ENCODE measurements at regions of chr5 and their contacts with region 1.

Region 1: GRCh38 chr5:139560752-139561654 is at the start of gene UBE2D2:
- DNase-seq: peak; percentile 97
- H3K4me3 Mint-ChIP-seq: peak within 1 kb of the TSS; percentile 98
- H3K27ac Mint-ChIP-seq: peak within 1 kb of the TSS; percentile 95
- H3K4me1 Mint-ChIP-seq: peaks cover 27% of the 10 kb centered on the region
- H3K27me3 Mint-ChIP-seq: no peaks in the 10 kb centered on the region
- total RNA-seq, gene UBE2D2: 251 and 265 TPM in 2 replicates

Region 2: GRCh38 chr5:138542956-138543729 is 1017.9 kb before region 1 on chr5 and contains the start of gene ETF1:
- intact Hi-C with region 1: loop called (anchors 10 kb)
- DNase-seq: peak; percentile 100
- H3K4me3 Mint-ChIP-seq: peak within 1 kb of the TSS; percentile 99
- H3K27ac Mint-ChIP-seq: peak within 1 kb of the TSS; percentile 100
- H3K4me1 Mint-ChIP-seq: peaks cover 54% of the 10 kb centered on the region
- H3K27me3 Mint-ChIP-seq: no peaks in the 10 kb centered on the region
- total RNA-seq, gene ETF1: 201 and 219 TPM in 2 replicates

Region 3: GRCh38 chr5:139341650-139342422 is 219.2 kb before region 1 on chr5 and contains the start of gene PAIP2:
- intact Hi-C with region 1: loop called (anchors 1 kb)
- DNase-seq: peak; percentile 95
- H3K4me3 Mint-ChIP-seq: peak within 1 kb of the TSS; percentile 94
- H3K27ac Mint-ChIP-seq: peak within 1 kb of the TSS; percentile 95
- H3K4me1 Mint-ChIP-seq: peaks cover 46% of the 10 kb centered on the region
- H3K27me3 Mint-ChIP-seq: no peaks in the 10 kb centered on the region
- total RNA-seq, gene PAIP2: 88.4 and 97.3 TPM in 2 replicates

Region 4: GRCh38 chr5:139422307-139422893 is 138.6 kb before region 1 on chr5:
- intact Hi-C with region 1: loop called (anchors 1 kb)
- DNase-seq: peak; percentile 54
- H3K4me3 Mint-ChIP-seq: no peak overlapping the region
- H3K27ac Mint-ChIP-seq: peak overlapping the region; percentile 26
- H3K4me1 Mint-ChIP-seq: peaks cover 22% of the 10 kb centered on the region
- H3K27me3 Mint-ChIP-seq: no peaks in the 10 kb centered on the region

Region 5: DNA sequence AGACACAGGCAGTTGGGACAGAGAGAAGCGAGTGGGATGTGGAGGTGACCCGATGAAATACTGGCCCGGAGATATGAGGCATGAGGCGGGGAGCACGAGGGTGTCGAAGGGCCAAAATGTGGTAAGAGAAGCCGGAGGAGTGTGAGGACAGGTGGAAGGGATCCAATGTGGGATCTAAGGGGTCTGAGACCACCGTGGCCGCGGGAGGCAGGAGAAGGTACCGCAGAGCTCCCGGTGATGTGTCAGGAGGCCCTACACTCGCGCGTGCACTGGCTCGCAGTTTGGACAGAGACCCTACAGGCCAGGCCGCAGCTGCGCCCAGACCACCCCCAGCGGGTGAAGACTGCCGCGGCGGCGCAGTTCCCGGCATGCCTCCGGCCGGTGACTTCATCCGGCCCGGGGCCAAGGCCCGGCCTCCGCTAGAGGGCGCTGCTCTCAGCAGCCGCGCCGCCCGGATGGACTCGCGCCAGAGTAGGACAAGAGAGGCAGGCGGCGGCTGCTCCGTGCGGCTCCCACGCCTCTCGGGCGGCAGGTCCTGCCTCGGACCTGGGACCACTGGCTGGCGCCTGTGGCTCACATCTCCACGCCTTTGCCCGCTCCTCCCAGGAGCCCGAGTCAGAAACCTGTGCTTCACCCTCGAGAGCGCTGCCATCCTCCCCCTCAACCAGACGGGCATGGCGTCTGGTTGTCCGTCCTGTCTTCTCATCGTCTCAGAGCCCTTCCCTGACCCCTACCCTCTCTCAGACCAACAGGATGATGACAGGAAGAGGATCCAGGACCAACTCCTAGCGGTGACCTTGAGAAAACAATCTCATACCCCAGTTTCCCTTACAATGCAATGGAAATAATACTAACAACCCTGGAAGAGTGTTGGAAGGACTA is 43.1 kb before region 1 on chr5:
- intact Hi-C with region 1: loop called (anchors 1 kb)
- DNase-seq: peak; percentile 88
- H3K4me3 Mint-ChIP-seq: peak overlapping the region; percentile 86
- H3K27ac Mint-ChIP-seq: peak overlapping the region; percentile 90
- H3K4me1 Mint-ChIP-seq: peaks cover 36% of the 10 kb centered on the region
- H3K27me3 Mint-ChIP-seq: peaks cover 2% of the 10 kb centered on the region

Region 6: DNA sequence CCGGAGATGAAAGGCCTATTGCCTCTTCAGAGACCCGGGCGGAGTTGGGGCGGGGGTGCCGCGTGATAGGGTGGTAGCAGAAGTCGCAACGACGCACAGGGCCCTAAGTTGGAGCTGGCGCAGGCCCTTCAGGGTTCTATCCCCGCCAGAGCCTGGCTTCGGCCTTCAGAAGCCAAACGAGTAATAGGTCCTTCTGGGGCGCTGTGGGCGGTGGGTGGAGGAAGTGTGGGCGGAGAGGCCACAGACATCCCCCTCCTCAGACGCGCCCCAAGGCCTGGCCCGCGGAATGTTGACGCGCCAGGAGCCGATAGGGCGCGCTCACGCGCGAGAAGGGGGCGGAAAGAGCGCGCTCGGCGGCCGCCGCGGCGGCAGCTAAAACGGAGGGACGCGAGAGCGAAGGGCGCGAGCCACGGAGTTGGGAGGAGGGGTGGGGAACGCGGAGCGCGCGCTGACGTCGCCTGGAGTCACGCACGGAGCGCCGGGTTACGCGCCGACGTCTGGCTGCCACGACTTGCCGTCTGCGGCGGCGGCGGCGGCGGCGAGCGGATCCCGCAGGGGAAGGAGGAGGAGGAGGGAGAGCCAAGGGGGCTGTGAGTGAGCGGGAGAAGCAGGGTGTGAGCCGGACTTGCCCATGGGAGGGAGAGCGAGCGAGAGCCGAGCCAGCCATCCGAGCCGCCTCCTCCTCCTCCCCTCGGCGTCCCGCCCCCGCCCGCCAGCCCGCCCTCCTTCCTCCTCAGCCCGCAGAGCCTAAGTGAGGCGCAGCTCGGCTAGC is 546.5 kb after region 1 on chr5:
- intact Hi-C with region 1: loop called (anchors 5 kb)
- DNase-seq: peak; percentile 90
- H3K4me3 Mint-ChIP-seq: peak overlapping the region; percentile 90
- H3K27ac Mint-ChIP-seq: peak overlapping the region; percentile 93
- H3K4me1 Mint-ChIP-seq: peaks cover 41% of the 10 kb centered on the region
- H3K27me3 Mint-ChIP-seq: peaks cover 60% of the 10 kb centered on the region

Measured in activated T-helper 1 cell treated with anti-CD3 and anti-CD28 coated beads, Interleukin-12 subunit alpha, Interleukin-12 subunit beta, Interleukin-2, Interleukin-4 antibody, amounts not matched to agents 30 ng/mL and 10 ng/mL and 1 ng/mL, durations not matched to agents 14 hours and 24 hours and 36 hours (primary cell).